ENCODE measurements at regions of chr4 and their contacts with region 1.

Region 1: DNA sequence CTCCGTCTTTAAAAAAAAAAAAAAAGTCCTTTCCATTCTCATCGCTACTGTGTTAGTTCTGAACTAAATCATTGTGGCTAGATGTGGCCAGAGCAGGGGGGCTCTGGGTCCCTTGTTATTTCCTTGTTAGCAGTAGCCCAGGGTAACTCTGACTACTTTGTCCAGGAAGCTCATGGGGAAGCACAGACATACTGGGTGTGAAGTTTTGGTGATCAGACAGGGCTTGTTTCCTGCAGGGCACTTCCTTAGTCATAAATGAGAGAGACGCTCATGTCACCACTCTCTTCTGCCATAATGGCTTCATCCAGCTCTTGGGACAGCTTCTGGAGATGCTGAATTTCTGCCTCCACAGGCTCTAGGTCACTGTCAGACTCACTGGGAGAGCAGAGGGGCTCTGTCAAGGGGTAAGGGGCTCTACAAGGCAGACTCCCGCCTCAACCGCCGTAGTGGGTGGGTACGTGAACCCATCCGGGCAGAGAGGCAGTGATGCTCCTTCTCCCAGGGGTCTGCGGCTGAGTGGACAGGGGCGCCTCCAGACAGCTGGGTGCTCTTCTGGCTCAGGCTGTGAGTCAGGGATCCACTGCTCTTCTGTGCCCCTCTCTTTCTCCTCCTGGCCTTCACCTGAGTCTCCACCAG is 12.9 kb downstream of the STIM2 start:
- DNase-seq: no peak
- ATAC-seq: no peak

Region 2: GRCh38 chr4:26912810-26913209 is 39.3 kb after region 1 on chr4:
- intact Hi-C with region 1: loop called (anchors 5 kb)
- DNase-seq: no peak
- ATAC-seq: no peak

Measured in Right ventricle myocardium inferior (tissue), 1 donor.